Ovary (tissue), 10 donors: ENCODE measurements at regions of chr13 and their contacts with region 1.

Region 1: DNA sequence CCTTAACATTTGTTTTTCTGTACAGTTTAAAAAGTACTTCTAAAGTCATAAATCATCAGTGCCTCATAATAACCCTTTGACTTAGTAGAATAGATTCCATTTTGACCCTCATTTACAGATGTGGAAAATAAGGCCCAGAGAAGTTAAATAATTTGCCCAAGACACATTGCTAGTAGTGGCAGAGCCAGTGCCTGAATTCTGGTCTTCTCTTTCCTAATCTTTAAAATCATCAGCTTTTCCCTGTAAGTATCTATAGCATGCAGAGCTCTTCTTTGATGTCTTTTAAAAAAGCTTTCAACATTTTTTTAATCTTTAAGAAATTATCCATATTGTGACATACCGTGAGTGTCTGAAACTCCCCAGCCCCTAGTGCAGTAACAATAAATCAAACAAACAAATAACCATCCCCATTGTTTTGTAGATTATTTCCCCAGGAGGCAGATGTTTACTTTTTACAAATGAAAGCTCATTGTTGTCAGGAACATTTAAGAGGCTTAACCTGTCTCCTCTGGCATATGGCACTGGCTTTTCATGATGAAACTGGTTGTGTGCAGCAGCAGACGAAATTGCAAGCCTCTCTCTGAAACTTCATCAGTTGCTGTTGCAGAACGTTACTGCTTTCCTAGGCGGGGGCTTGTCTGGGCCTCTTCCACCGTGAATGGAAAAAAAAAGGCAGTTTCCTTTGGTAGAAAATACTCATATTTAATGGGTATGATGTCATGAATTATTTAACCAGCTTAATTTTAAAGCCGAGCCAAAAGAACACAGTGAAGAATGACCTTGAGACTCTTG is 31.7 kb upstream of the PCDH8 start:
- DNase-seq: peak in 1 of 5 donors; percentile 15
- H3K4me3 ChIP-seq: no peak overlapping the region
- H3K27ac ChIP-seq: peak overlapping the region in 1 of 2 donors; percentile 5
- H3K4me1 ChIP-seq: peaks cover 4% of the 10 kb centered on the region
- H3K27me3 ChIP-seq: no peaks in the 10 kb centered on the region
- CTCF ChIP-seq: no peak
- EP300 ChIP-seq: no peak
- POLR2A ChIP-seq: no peak

Region 2: GRCh38 chr13:53191091-53191490 is 310.9 kb after region 1 on chr13:
- intact Hi-C with region 1: loop called in 1 of 4 experiments (anchors 5 kb)
- DNase-seq: no peak
- H3K4me3 ChIP-seq: no peak overlapping the region
- H3K27ac ChIP-seq: no peak overlapping the region
- H3K4me1 ChIP-seq: no peaks in the 10 kb centered on the region
- H3K27me3 ChIP-seq: no peaks in the 10 kb centered on the region
- CTCF ChIP-seq: no peak
- EP300 ChIP-seq: no peak
- POLR2A ChIP-seq: no peak